ENCODE measurements at regions of chr19 and their contacts with region 1.

Region 1: DNA sequence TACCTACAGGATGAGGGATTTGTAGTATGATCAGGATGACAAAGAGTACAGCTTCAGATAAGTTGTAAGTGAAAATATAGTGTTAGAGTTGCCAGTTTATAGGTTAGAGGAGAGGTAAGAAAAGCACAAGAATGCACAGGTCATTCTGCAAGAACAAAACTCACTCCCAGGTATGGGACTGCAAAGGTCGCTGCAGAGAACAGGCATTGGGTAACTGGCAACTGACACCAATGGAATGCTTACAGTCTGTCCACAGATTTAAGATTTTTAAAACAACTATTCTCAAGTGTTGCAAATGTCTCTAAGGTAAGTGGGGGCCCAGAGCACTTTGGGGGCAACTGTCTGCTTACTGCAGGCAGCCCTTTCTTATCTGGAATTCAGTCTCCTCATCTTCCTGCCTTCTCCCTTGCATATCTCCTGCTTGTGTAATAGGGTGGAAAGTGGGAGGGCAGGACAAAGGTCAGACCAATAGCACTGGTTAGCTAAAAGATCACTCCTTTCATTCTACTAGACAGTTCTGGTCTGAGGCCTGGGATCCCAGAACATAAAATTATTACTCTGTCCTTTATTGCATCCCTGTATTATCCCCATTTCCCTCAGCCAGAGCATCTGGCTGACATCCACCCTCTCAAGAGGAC is 42.3 kb upstream of the ZNF726 start:
- DNase-seq: no peak

Region 2: GRCh38 chr19:23699082-23699761 is 173.2 kb before region 1 on chr19:
- in situ Hi-C with region 1: no loop called
- DNase-seq: peak; percentile 22

Region 3: DNA sequence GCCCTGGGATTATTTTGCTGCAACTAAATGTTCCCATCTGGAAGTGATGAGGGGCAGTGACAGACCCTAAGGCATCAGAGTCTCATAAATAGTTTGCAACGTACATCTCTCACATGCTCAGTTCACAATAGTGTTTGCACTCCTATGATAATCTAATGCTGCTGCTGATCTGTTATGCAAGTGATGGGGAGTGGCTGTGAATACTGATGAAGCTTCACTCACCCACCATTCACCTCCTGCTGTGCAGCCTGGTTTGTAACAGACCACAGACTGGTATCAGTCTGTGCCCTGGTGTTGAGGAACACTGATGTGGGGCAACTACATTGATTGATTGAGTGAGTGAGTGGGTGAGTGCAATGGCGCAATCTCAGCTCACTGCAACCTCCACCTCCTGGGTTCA is 97.2 kb after region 1 on chr19:
- in situ Hi-C with region 1: loop called (anchors 5 kb)
- DNase-seq: no peak

Measured in Caki2 (cell line).